AG04450 (cell line): ENCODE measurements at regions of chr3 and their contacts with region 1.

Region 1: GRCh38 chr3:114383875-114384557 is 90.2 kb downstream of the TIGIT start:
- DNase-seq: peak; percentile 69
- H3K4me3 ChIP-seq: peak overlapping the region; percentile 45
- H3K27ac ChIP-seq: peak overlapping the region; percentile 53
- H3K27me3 ChIP-seq: no peaks in the 10 kb centered on the region
- CTCF ChIP-seq: peak; percentile 98

Region 2: DNA sequence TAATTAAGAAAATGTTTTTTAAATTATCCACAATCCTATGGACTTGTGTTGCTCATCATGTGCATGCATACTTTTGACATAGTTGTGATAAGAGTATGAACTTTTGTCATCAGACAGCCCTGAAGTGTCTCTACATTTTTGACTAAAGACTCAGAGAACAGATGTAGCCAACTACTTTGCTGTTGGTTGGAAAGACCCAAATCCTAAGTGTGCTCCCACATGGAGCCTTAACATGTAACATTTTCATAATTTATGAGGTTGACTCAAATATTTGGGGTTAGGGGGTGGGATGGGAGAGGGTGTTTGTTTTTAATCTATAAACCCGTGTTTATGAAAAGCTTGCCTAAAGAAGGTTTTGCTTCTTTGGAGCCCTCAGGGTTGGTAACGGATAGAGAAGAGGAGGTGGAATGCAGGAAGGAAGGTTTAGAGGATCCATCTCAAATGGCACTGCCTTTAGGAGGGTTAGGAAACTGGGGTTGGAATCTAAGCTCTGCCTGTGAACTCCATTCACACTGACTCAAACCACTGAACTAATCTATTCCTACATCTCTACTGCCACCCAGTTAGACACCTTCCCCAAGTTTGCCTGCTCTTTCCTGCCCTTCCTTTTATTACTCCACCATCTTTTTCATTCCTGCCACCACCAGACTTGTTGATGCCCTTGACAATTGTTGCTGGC is 1169.0 kb before region 1 on chr3:
- CTCF ChIA-PET with region 1: no interaction called
- POLR2A ChIA-PET with region 1: interaction called, 11 read pairs
- DNase-seq: no peak
- H3K4me3 ChIP-seq: no peak overlapping the region
- H3K27ac ChIP-seq: no peak overlapping the region
- H3K27me3 ChIP-seq: peaks cover 7% of the 10 kb centered on the region
- CTCF ChIP-seq: no peak

Region 3: GRCh38 chr3:114400371-114400770 is 16.4 kb after region 1 on chr3:
- CTCF ChIA-PET with region 1: interaction called, 24 read pairs
- POLR2A ChIA-PET with region 1: interaction called, 3 read pairs
- DNase-seq: no peak
- H3K4me3 ChIP-seq: no peak overlapping the region
- H3K27ac ChIP-seq: no peak overlapping the region
- H3K27me3 ChIP-seq: no peaks in the 10 kb centered on the region
- CTCF ChIP-seq: no peak

Region 4: GRCh38 chr3:114418724-114419543 is 34.9 kb after region 1 on chr3:
- CTCF ChIA-PET with region 1: interaction called, 23 read pairs
- POLR2A ChIA-PET with region 1: interaction called, 5 read pairs
- DNase-seq: peak; percentile 87
- H3K4me3 ChIP-seq: no peak overlapping the region
- H3K27ac ChIP-seq: peak overlapping the region; percentile 42
- H3K27me3 ChIP-seq: no peaks in the 10 kb centered on the region
- CTCF ChIP-seq: peak; percentile 77

Region 5: GRCh38 chr3:114706591-114707232 is 322.7 kb after region 1 on chr3:
- CTCF ChIA-PET with region 1: no interaction called
- POLR2A ChIA-PET with region 1: no interaction called
- DNase-seq: peak; percentile 21
- H3K4me3 ChIP-seq: no peak overlapping the region
- H3K27ac ChIP-seq: no peak overlapping the region
- H3K27me3 ChIP-seq: no peaks in the 10 kb centered on the region
- CTCF ChIP-seq: no peak

Region 6: GRCh38 chr3:115092220-115092791 is 708.3 kb after region 1 on chr3:
- CTCF ChIA-PET with region 1: interaction called, 16 read pairs
- POLR2A ChIA-PET with region 1: no interaction called
- DNase-seq: peak; percentile 42
- H3K4me3 ChIP-seq: no peak overlapping the region
- H3K27ac ChIP-seq: no peak overlapping the region
- H3K27me3 ChIP-seq: no peaks in the 10 kb centered on the region
- CTCF ChIP-seq: peak; percentile 97